PC-9 (cell line): ENCODE measurements at regions of chr4 and their contacts with region 1.

Region 1: GRCh38 chr4:167930171-167930570 is 162.2 kb upstream of the ANXA10 start:
- DNase-seq: no peak
- H3K4me3 ChIP-seq: no peak overlapping the region
- H3K27ac ChIP-seq: no peak overlapping the region
- H3K4me1 ChIP-seq: no peaks in the 10 kb centered on the region
- H3K27me3 ChIP-seq: no peaks in the 10 kb centered on the region
- CTCF ChIP-seq: no peak

Region 2: DNA sequence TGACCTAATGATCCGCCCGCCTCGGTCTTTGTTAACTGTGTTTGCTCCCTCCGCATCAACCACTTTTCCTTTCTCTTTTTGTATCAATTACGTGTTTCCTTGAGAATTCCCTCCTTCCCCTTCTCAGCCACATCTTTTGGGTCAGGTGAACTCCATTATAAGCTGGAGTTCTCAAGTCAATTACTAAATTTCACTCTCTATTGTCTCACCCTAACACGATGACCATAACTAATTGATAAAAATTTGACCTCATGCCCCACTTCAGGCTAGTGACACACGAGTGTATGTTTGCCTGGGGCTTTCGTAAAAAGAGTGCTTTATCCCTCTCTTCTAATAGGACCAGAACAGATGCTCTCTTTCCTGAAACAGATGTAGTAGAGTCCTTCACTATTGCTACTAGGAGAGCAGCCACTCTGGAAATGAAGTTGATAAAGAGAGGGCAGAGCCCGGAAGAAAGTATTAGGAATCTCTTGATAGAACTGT is 241.5 kb before region 1 on chr4:
- CTCF ChIA-PET with region 1: no interaction called
- POLR2A ChIA-PET with region 1: interaction called, 20 read pairs
- intact Hi-C with region 1: no loop called
- DNase-seq: no peak
- H3K4me3 ChIP-seq: peak overlapping the region; percentile 14; the same call in 1 of the 2 replicates
- H3K27ac ChIP-seq: no peak overlapping the region
- H3K4me1 ChIP-seq: no peaks in the 10 kb centered on the region
- H3K27me3 ChIP-seq: no peaks in the 10 kb centered on the region
- CTCF ChIP-seq: no peak